Activated B cell treated with CpG ODN at 0.5 μM for 24 hours (primary cell): ENCODE measurements at regions of chr19 and their contacts with region 1.

Region 1: DNA sequence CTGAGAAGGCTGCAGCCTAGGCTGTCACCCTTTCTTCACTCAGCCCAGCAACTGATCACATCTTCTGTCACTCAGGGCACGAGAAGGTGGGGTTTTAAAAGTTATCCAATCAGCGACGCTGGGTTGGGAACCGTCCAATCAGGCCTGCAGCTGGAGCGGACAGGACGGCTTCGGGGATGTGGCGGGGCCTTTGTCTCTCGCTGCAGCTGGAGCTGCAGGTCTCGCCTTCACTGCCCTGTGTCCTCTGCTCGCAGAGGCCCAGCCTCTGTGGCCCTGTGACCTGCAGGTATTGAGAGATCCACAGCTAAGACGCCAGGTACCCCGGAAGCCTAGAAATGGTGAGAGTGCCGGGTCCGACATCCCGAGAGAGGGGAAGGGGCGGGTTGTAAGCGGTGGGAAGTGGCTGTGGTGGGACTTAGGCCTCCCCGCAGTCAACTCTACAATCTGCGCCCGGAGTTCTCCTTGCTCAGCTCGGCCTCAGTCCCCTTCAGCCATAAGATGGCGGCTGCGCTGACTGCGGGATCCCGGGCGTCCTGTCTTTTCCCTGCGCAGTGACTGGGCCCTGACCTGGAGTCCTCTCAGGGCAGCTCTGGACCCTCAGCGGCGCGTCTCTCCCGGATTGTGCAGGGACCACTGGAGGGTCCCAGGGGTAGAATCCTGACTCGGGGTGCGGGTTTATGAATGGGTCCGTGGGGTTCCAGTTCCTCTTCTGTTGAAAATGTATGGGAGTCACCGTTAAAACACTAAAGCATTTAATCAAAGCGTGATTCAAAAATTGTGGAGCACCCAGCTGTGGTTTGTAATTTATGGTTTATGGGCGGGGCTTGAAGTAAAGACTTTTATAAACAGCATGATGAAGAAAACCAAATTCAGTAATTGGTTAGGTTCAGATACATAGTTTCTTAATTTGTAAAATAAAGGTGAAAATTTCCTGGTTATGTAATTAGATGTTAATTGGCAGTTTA is at the start of gene ZNF714:
- DNase-seq: peak; percentile 63
- ATAC-seq: peak; percentile 100
- H3K4me3 Mint-ChIP-seq: peak within 1 kb of the TSS; percentile 100
- H3K27ac Mint-ChIP-seq: peak within 1 kb of the TSS; percentile 93
- H3K4me1 Mint-ChIP-seq: peaks cover 13% of the 10 kb centered on the region
- H3K27me3 Mint-ChIP-seq: no peaks in the 10 kb centered on the region
- CTCF ChIP-seq: no peak
- total RNA-seq, gene ZNF714: 11.1 and 12.5 TPM in 2 replicates

Region 2: GRCh38 chr19:20999731-21000352 is 82.5 kb before region 1 on chr19:
- CTCF ChIA-PET with region 1: no interaction called
- POLR2A ChIA-PET with region 1: no interaction called
- intact Hi-C with region 1: loop called (anchors 1 kb)
- DNase-seq: peak; percentile 74
- ATAC-seq: peak; percentile 100
- H3K4me3 Mint-ChIP-seq: peak overlapping the region; percentile 91
- H3K27ac Mint-ChIP-seq: peak overlapping the region; percentile 70
- H3K4me1 Mint-ChIP-seq: peaks cover 6% of the 10 kb centered on the region
- H3K27me3 Mint-ChIP-seq: no peaks in the 10 kb centered on the region
- CTCF ChIP-seq: no peak

Region 3: DNA sequence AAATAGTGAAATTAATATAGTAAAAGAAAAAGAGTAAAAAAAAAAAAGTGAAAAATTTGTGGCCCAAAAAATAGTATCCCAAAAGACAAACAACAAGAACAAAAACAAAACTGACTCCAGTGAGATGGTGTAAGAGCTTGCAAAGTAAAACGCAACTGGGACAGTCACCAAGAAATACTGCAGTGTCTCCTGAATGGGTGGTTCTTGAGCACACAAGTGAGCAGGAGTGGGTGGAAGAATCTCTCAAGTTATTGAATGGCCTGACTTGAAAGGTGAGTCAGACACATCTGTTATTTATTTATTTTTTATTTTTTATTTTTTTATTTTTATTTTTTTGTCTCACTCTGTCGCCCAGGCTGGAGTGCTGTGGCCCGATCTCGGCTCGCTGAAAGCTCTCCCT is 316.6 kb after region 1 on chr19:
- CTCF ChIA-PET with region 1: no interaction called
- POLR2A ChIA-PET with region 1: no interaction called
- intact Hi-C with region 1: no loop called
- DNase-seq: no peak
- ATAC-seq: no peak
- H3K4me3 Mint-ChIP-seq: peak overlapping the region; percentile 53
- H3K27ac Mint-ChIP-seq: no peak overlapping the region
- H3K4me1 Mint-ChIP-seq: peaks cover 29% of the 10 kb centered on the region
- H3K27me3 Mint-ChIP-seq: no peaks in the 10 kb centered on the region
- CTCF ChIP-seq: no peak